PC-3 (cell line): ENCODE measurements at regions of chr13 and their contacts with region 1.

Region 1: DNA sequence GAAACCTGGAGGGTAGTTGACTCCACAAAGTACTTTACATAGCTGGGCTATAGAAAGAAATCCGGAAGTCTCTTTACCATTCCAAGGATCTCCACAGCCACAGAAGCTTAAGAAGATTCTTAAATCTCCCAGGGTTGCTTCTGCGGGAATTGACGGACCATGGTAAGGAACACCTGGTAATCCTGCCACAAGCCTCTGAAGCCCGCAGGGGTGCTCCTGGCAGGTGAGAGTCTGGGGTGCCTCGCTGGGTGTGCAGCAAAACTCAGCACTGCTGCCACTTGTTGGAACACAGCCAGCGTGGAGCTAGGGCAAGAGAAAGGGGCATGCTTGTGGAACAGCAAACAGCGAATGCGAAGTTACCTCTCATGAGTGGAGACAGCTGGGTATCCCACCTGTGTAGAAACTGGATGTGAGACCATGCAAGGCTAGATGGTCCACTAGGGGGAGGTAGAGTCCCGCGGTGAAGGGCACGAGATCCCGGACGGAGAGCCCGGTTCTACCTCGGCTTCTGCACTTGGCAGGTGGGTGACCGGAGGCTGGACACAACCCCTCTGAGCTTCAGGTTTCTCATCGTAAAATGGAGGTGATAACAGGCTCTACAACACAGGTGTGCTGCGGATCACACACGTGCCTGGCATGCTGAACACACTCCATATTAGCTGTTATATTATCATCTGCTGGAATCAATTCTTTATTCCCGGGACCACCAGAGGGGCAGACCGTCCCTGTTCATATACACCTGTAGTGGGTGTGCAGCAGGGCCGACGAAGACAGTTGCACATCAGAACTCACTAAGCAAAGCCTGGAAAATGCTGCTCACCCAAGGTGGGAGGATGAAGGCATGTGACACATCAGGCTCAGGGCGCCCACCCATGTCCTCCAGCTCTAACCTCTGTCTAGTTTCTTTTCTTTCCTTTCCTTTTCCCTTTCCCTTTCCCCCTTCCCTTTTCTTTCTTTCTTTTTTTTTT is 24.1 kb upstream of the UBAC2 start:
- DNase-seq: peak; percentile 81
- ATAC-seq: peak; percentile 99
- H3K4me3 ChIP-seq: peak overlapping the region; percentile 50; the same call in 1 of the 2 replicates
- H3K27ac ChIP-seq: no peak overlapping the region
- H3K4me1 ChIP-seq: no peaks in the 10 kb centered on the region; the same call in 1 of the 2 replicates
- H3K27me3 ChIP-seq: no peaks in the 10 kb centered on the region
- CTCF ChIP-seq: peak; percentile 86

Region 2: GRCh38 chr13:98775844-98776598 is 400.6 kb before region 1 on chr13:
- CTCF ChIA-PET with region 1: no interaction called
- POLR2A ChIA-PET with region 1: no interaction called
- intact Hi-C with region 1: no loop called
- DNase-seq: peak; percentile 90
- ATAC-seq: peak; percentile 100
- H3K4me3 ChIP-seq: no peak overlapping the region
- H3K27ac ChIP-seq: peak overlapping the region; percentile 57
- H3K4me1 ChIP-seq: peaks cover 14% of the 10 kb centered on the region
- H3K27me3 ChIP-seq: no peaks in the 10 kb centered on the region
- CTCF ChIP-seq: no peak

Region 3: DNA sequence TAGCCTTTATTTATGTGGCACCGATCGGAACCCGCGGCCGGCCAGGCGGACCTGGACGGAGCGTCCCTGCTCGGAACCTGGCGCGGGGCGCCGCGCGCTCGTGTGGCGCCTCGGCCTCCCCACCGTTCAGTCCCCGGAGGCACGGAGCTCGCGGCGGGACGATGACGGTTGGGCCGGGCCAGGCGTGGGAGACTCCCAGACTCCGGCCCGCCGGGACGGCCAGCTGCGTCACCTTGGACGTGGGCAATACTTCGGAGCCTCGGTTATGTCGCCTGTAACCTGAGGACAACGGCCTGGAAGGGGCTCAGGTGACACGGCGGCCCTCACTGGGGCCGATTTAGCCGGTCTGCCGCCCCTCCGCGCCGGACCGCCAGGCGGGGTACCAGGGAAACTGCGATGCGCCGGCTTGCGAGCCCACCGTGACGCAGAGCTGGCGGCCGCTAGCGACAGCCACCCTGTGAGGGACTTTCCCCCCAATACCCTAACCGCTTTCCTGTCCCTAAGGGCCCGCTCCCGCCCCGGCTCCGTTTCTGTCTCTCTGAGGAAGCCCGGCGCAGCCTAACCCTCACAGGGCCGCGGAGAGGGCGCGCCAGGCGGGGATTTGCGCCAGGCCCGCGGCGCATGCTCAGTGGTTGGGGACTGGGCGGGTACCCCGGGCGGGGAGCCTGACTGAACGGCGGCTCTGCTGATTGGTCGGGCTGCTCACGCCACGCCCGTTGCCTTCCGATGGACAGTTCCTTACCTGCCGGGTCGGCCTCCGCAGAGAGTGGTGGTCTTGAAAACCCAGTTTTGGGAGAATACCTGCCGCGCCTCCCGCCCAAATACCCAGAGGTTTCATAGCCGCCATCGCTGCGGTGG is 89.3 kb before region 1 on chr13:
- CTCF ChIA-PET with region 1: no interaction called
- POLR2A ChIA-PET with region 1: no interaction called
- intact Hi-C with region 1: no loop called
- DNase-seq: peak; percentile 84
- ATAC-seq: peak; percentile 75
- H3K4me3 ChIP-seq: peak overlapping the region; percentile 87
- H3K27ac ChIP-seq: peak overlapping the region; percentile 8; the same call in 1 of the 2 replicates
- H3K4me1 ChIP-seq: peaks cover 6% of the 10 kb centered on the region
- H3K27me3 ChIP-seq: no peaks in the 10 kb centered on the region
- CTCF ChIP-seq: 0 out of 2 replicates have a peak, but pooled peaks have one; percentile 11

Region 4: DNA sequence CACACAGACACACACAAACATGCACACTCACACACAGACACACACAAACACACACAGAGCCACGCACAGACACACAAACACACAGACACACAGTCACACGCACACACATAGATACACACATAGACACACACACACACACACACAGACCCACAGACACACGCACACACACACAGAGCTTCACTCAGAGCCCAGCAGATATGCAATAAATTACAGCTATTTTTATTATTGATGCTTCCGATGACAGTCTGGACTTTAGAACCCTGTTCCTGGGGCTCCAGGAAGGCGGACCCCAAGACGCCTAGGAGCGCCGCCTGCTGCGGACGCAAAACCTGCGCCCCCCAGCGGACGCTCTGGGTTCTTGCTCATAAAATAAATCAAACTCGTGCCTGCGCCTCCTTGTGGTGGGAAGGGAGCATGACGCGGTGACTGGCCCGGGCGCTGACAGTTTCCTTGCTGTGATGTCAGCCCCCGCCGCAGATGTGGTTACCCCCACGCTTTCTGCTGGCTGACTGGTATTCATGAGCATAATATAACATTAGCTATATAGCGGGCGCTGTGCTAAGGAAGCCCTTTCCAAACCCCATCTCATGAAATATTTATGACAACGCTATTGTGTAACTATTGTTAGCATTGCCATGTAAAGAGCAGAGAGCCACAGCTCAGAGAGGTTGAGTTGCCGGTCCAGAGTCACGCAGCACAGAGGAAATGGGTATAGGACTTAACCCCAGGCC is 260.3 kb after region 1 on chr13:
- CTCF ChIA-PET with region 1: interaction called, 10 read pairs
- POLR2A ChIA-PET with region 1: no interaction called
- intact Hi-C with region 1: loop called (anchors 2 kb)
- DNase-seq: peak; percentile 73
- ATAC-seq: peak; percentile 54
- H3K4me3 ChIP-seq: peak overlapping the region; percentile 49; the same call in 1 of the 2 replicates
- H3K27ac ChIP-seq: no peak overlapping the region
- H3K4me1 ChIP-seq: peaks cover 22% of the 10 kb centered on the region
- H3K27me3 ChIP-seq: no peaks in the 10 kb centered on the region
- CTCF ChIP-seq: peak; percentile 100